ENCODE measurements at regions of chr14 and their contacts with region 1.

Region 1: GRCh38 chr14:101964297-101965144 is at the start of gene DYNC1H1:
- DNase-seq: peak; percentile 91
- H3K4me3 Mint-ChIP-seq: peak within 1 kb of the TSS; percentile 88
- H3K27ac Mint-ChIP-seq: peak within 1 kb of the TSS; percentile 84
- H3K4me1 Mint-ChIP-seq: peaks cover 35% of the 10 kb centered on the region
- H3K27me3 Mint-ChIP-seq: no peaks in the 10 kb centered on the region
- total RNA-seq, gene DYNC1H1: 242 to 245 TPM

Region 2: GRCh38 chr14:101905614-101906013 is 58.9 kb before region 1 on chr14:
- CTCF ChIA-PET with region 1: no interaction called
- POLR2A ChIA-PET with region 1: no interaction called
- intact Hi-C with region 1: no loop called
- DNase-seq: no peak
- H3K4me3 Mint-ChIP-seq: no peak overlapping the region
- H3K27ac Mint-ChIP-seq: peak overlapping the region; percentile 51
- H3K4me1 Mint-ChIP-seq: no peaks in the 10 kb centered on the region
- H3K27me3 Mint-ChIP-seq: no peaks in the 10 kb centered on the region

Region 3: DNA sequence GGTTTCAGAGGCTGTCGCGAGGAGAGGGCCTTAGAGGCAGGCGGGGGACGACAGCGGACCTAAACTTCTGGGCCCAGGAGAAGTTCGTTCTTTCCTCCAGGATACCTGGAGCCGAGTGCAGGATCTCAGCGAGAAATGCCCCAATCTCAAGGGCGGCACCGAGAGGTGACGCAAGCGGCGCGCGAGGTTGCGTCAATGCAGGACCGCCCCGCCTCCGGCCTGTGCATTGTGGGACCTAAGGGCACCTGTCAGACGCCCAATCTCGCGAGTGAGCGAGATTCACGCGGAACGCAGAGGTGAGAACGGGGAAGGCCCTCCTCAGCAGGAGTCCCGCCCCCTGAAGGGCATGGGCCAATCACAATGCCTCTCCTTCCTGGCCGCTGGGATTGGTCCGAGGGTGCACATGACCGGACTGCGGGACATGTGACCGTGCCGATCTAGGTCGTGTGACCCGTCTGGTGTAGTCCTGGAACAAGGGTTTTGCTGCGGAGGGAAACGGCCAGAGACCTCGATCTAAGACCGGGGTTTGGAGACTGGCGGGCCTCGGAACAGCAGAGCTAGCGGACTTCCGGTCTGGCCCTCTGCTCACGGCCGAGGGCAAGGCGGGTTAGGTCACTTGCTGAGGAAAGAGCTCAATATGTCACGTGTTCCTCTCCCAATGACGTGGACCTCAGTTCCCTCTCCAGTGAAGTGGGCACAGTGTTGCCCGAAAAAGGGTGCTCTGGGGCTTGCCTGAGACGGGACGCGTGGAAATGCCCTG is 16.4 kb before region 1 on chr14:
- CTCF ChIA-PET with region 1: interaction called, 14 read pairs
- POLR2A ChIA-PET with region 1: interaction called, 10 read pairs
- intact Hi-C with region 1: loop called (anchors 1 kb)
- DNase-seq: peak; percentile 100
- H3K4me3 Mint-ChIP-seq: peak overlapping the region; percentile 92
- H3K27ac Mint-ChIP-seq: peak overlapping the region; percentile 95
- H3K4me1 Mint-ChIP-seq: peaks cover 15% of the 10 kb centered on the region
- H3K27me3 Mint-ChIP-seq: peaks cover 20% of the 10 kb centered on the region

Region 4: GRCh38 chr14:102020058-102020971 is 55.8 kb after region 1 on chr14:
- CTCF ChIA-PET with region 1: no interaction called
- POLR2A ChIA-PET with region 1: no interaction called
- intact Hi-C with region 1: loop called (anchors 2 kb)
- DNase-seq: peak; percentile 80
- H3K4me3 Mint-ChIP-seq: no peak overlapping the region
- H3K27ac Mint-ChIP-seq: peak overlapping the region; percentile 85
- H3K4me1 Mint-ChIP-seq: peaks cover 23% of the 10 kb centered on the region
- H3K27me3 Mint-ChIP-seq: no peaks in the 10 kb centered on the region

Region 5: DNA sequence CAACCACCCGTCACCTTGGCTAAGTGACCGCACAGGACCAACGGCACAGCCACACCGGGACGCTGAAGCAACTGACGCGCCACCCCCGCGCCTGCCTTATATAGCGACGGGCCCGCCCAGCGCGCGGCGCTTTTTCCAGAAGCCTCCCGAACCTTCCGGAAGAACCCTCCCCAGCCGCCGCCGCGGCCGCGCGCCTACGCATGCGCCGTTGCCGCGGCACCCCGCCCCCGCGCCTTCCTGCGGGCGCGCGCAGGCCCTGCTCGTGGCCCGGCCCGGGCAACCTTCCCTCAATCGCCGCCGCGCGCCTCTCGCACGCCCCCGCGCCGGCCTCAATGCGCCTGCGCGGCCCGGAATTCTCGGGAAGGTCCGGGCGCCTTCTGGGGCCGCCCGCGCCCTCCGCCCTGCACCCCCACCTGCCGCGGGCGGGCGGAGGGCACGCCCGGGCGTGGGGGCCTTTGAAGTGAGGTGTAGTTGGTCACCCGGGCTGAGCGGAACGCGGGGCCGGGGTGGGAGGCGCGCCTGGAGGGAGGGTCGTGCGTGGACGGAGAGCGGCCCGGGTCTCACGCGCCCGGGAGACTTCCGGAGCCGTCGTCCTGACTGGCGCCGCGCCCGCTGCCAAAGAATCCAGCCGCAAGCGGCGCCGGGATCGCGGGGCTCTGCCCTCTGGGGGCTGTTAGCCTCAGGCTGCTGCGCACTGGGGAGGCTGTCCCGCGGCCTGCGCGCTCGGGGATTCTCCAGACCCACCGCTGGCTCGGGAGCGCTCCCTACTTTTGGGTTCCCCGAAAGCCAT is 122.6 kb after region 1 on chr14 and contains the start of gene HSP90AA1:
- CTCF ChIA-PET with region 1: interaction called, 3 read pairs
- POLR2A ChIA-PET with region 1: interaction called, 3 read pairs
- intact Hi-C with region 1: loop called (anchors 1 kb)
- DNase-seq: peak; percentile 96
- H3K4me3 Mint-ChIP-seq: peak within 1 kb of the TSS; percentile 84
- H3K27ac Mint-ChIP-seq: peak within 1 kb of the TSS; percentile 94
- H3K4me1 Mint-ChIP-seq: peaks cover 43% of the 10 kb centered on the region
- H3K27me3 Mint-ChIP-seq: no peaks in the 10 kb centered on the region
- total RNA-seq, gene HSP90AA1: 1,107 to 1,148 TPM

Region 6: DNA sequence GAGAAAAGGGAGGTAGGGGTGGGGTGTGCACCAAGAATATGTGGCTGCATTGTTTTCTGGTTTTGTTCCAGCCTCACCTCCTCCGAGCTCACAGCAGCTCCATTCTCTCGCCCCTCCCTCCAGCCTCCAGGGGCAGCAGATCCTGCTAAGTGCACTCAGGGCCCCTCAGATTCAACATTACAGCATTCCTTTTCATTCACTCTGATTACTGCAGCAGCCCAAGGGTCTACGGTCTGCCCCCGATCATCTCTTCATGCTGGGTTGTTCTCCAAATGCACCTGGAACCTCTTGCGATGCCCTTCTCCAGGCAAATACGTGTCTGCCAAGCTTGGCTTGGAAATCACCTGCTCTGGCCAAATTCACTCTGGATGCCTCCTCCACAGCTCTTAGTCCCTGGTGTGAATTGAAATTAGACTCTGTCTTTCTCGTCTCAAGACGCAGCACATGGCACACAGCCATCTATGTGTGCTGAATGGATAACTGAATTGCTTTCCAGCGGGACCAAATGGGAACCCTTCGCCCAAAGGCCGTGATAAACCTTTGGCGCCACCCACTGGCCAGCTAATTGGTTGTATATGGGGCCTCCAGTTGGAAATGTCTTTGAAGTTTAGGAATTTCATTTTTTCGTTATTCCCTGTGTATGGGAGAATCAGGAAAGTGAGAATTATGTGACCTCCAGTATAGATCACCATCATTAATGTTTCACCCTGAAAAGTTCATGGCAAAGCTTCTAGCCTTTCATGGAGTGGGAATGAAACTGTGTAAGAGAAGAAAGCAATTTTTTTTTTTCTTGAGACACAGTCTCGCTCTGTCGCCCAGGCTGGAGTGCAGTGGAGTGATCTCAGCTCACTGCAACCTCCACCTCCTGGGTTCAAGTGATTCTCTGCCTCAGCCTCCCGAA is 131.9 kb after region 1 on chr14:
- CTCF ChIA-PET with region 1: interaction called, 9 read pairs
- POLR2A ChIA-PET with region 1: no interaction called
- intact Hi-C with region 1: loop called (anchors 1 kb)
- DNase-seq: peak; percentile 80
- H3K4me3 Mint-ChIP-seq: no peak overlapping the region
- H3K27ac Mint-ChIP-seq: no peak overlapping the region
- H3K4me1 Mint-ChIP-seq: peaks cover 22% of the 10 kb centered on the region
- H3K27me3 Mint-ChIP-seq: no peaks in the 10 kb centered on the region

Region 7: GRCh38 chr14:102187058-102187457 is 222.5 kb after region 1 on chr14:
- CTCF ChIA-PET with region 1: no interaction called
- POLR2A ChIA-PET with region 1: no interaction called
- intact Hi-C with region 1: loop called (anchors 10 kb)
- DNase-seq: no peak
- H3K4me3 Mint-ChIP-seq: no peak overlapping the region
- H3K27ac Mint-ChIP-seq: peak overlapping the region; percentile 69
- H3K4me1 Mint-ChIP-seq: peaks cover 62% of the 10 kb centered on the region
- H3K27me3 Mint-ChIP-seq: no peaks in the 10 kb centered on the region

Region 8: DNA sequence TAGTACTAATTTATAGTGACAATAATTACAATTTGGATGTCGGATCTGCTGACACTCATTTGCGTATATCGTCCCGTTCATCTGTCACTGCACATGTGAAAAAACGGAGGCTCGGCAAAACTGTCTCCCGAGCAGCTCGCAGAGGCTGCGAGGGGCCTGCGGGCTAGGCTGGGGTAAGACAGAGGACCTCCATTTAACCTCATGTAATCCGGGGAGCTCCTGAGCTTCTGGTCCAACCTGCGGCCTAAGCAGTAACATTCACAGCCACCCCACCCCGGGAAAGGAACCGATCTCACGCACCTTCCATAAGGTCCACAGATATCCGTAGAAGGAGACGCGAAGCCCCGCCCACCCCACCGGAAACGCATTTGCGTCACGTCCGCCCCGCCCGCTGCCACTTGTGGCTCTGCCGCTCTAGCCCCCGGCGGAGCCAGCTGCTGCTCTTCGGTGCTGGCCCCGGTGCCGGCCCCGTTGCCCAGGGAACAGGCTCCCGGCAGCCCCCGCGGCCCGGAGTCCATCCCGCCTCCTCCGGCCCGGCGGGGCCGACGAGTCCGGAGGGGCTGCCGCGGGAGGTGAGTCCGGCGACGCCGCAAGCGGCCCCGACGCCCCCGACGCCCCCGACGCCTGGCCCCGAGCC is 398.1 kb after region 1 on chr14 and contains the starts of genes CINP and TECPR2:
- CTCF ChIA-PET with region 1: interaction called, 4 read pairs
- POLR2A ChIA-PET with region 1: no interaction called
- intact Hi-C with region 1: loop called (anchors 2 kb)
- DNase-seq: peak; percentile 99
- H3K4me3 Mint-ChIP-seq: no peak within 1 kb of the TSS
- H3K27ac Mint-ChIP-seq: peak within 1 kb of the TSS; percentile 96
- H3K4me1 Mint-ChIP-seq: peaks cover 31% of the 10 kb centered on the region
- H3K27me3 Mint-ChIP-seq: no peaks in the 10 kb centered on the region
- total RNA-seq, gene CINP: 50.5 to 51.2 TPM
- total RNA-seq, gene TECPR2: 6.2 to 7.0 TPM

Measured in activated CD4-positive, alpha-beta memory T cell treated with anti-CD3 and anti-CD28 coated beads for 36 hours (primary cell).